MCF 10A (cell line): ENCODE measurements at regions of chr4 and their contacts with region 1.

Region 1: GRCh38 chr4:82739316-82740179 is 59.0 kb downstream of the SCD5 start:
- DNase-seq: peak; percentile 68
- H3K4me3 Mint-ChIP-seq: no peak overlapping the region
- H3K27ac Mint-ChIP-seq: no peak overlapping the region
- H3K4me1 Mint-ChIP-seq: peaks cover 8% of the 10 kb centered on the region
- H3K27me3 Mint-ChIP-seq: no peaks in the 10 kb centered on the region
- CTCF ChIP-seq: peak; percentile 68

Region 2: GRCh38 chr4:82462415-82462831 is 277.1 kb before region 1 on chr4:
- CTCF ChIA-PET with region 1: interaction called, 7 read pairs
- POLR2A ChIA-PET with region 1: no interaction called
- intact Hi-C with region 1: loop called (anchors 1 kb)
- DNase-seq: peak; percentile 90
- H3K4me3 Mint-ChIP-seq: no peak overlapping the region
- H3K27ac Mint-ChIP-seq: no peak overlapping the region
- H3K4me1 Mint-ChIP-seq: peaks cover 6% of the 10 kb centered on the region
- H3K27me3 Mint-ChIP-seq: no peaks in the 10 kb centered on the region
- CTCF ChIP-seq: peak; percentile 86

Region 3: DNA sequence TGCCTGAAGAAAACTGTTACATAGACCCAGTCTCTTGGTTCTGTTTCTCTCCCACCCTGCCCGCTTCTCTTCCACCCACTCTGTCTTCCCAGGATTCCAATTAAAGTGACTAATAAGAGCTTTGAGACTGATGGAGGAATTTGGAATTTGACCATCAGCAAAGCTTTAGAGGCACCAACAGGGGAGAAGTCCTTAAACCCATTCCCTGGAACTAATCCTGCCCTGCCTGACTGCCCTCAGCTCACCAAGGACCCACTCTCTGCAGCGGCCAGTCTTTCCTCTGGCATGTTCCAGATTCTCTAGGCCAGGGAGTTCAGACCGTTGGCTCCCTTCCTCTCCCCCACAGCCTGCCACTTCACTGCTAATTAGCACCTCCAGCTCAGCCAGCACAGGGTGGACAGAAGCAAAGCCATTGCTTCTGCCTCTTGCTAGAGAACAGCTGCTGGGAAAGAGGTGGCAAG is 35.2 kb after region 1 on chr4:
- CTCF ChIA-PET with region 1: no interaction called
- POLR2A ChIA-PET with region 1: no interaction called
- intact Hi-C with region 1: no loop called
- DNase-seq: no peak
- H3K4me3 Mint-ChIP-seq: no peak overlapping the region
- H3K27ac Mint-ChIP-seq: no peak overlapping the region
- H3K4me1 Mint-ChIP-seq: no peaks in the 10 kb centered on the region
- H3K27me3 Mint-ChIP-seq: no peaks in the 10 kb centered on the region
- CTCF ChIP-seq: no peak